ENCODE measurements at regions of chr1 and their contacts with region 1.

Region 1: GRCh38 chr1:161045750-161046571 is at the start of gene USF1:
- DNase-seq: peak; percentile 97

Region 2: GRCh38 chr1:161021165-161021960 is 24.6 kb before region 1 on chr1:
- CTCF ChIA-PET with region 1: interaction called, 3 read pairs
- POLR2A ChIA-PET with region 1: interaction called, 32 read pairs
- DNase-seq: peak; percentile 92